CD4-positive, alpha-beta T cell (primary cell): ENCODE measurements at regions of chr6 and their contacts with region 1.

Region 1: GRCh38 chr6:160455541-160456213 is 107.5 kb downstream of the SLC22A3 start:
- DNase-seq: peak; percentile 49 to 80 (median 62)
- ATAC-seq: peak; percentile 98
- H3K4me3 ChIP-seq: no peak overlapping the region
- H3K4me3 Mint-ChIP-seq: no peak overlapping the region
- H3K27ac ChIP-seq: no peak overlapping the region
- H3K27ac Mint-ChIP-seq: no peak overlapping the region
- H3K4me1 ChIP-seq: peaks cover 47% of the 10 kb centered on the region
- H3K4me1 Mint-ChIP-seq: peaks cover 35% of the 10 kb centered on the region
- H3K27me3 ChIP-seq: no peaks in the 10 kb centered on the region
- H3K27me3 Mint-ChIP-seq: peaks cover 29% of the 10 kb centered on the region
- CTCF ChIP-seq: peak; percentile 98

Region 2: GRCh38 chr6:160088069-160088783 is 367.5 kb before region 1 on chr6:
- CTCF ChIA-PET with region 1: interaction called, 4 read pairs
- POLR2A ChIA-PET with region 1: no interaction called
- intact Hi-C with region 1: loop called in 1 of 2 experiments (anchors 5 kb)
- DNase-seq: no peak
- ATAC-seq: no peak
- H3K4me3 ChIP-seq: no peak overlapping the region
- H3K4me3 Mint-ChIP-seq: no peak overlapping the region
- H3K27ac ChIP-seq: no peak overlapping the region
- H3K27ac Mint-ChIP-seq: no peak overlapping the region
- H3K4me1 ChIP-seq: peaks cover 3% of the 10 kb centered on the region
- H3K4me1 Mint-ChIP-seq: no peaks in the 10 kb centered on the region
- H3K27me3 ChIP-seq: no peaks in the 10 kb centered on the region
- H3K27me3 Mint-ChIP-seq: no peaks in the 10 kb centered on the region
- CTCF ChIP-seq: no peak

Region 3: DNA sequence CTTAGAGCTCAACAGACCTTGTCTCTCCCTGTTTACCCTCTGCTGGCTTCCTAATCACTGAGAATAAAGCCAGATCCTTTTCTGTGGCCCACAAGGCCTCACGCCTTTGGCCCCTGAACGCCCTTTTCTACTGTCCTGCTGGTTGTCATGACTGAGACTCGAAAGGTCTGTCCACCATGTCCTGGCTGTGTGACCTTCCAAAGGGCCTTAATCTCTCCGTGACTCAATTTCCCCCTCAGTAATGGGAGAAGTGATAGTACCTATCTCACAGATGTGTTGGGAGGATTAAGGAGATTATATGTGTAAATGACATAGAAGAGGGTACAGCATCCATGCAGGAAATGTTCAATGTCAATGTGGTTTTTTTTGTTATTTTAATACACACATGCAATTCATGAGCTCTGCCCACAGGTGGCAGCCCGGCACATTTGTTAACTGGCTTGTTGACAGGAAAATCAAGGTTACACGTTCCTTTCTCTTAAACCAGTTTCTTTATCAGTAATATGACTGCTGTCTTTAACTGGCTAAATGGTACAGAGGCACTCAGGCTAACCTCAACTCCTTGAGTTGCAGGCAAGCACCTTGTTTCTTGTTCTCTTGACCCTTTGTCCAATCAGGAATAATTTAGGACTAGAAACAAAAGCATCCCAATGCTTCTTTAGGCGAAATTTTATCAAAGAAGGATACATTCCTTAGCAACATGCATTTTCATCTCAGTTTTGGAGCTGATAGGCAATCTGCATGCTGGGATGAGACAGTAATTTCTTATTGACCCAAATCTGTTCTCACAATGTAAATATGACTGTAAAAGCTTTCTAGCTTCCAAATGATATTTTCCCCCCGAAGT is 317.5 kb before region 1 on chr6:
- CTCF ChIA-PET with region 1: interaction called, 26 read pairs
- POLR2A ChIA-PET with region 1: no interaction called
- intact Hi-C with region 1: loop called (anchors 1 kb)
- DNase-seq: peak; percentile 41 to 74 (median 57)
- ATAC-seq: peak; percentile 68
- H3K4me3 ChIP-seq: no peak overlapping the region
- H3K4me3 Mint-ChIP-seq: no peak overlapping the region
- H3K27ac ChIP-seq: no peak overlapping the region
- H3K27ac Mint-ChIP-seq: no peak overlapping the region
- H3K4me1 ChIP-seq: peaks cover 7% of the 10 kb centered on the region
- H3K4me1 Mint-ChIP-seq: peaks cover 9% of the 10 kb centered on the region
- H3K27me3 ChIP-seq: no peaks in the 10 kb centered on the region
- H3K27me3 Mint-ChIP-seq: no peaks in the 10 kb centered on the region
- CTCF ChIP-seq: peak; percentile 78

Region 4: GRCh38 chr6:160469153-160469552 is 13.5 kb after region 1 on chr6:
- CTCF ChIA-PET with region 1: no interaction called
- POLR2A ChIA-PET with region 1: no interaction called
- intact Hi-C with region 1: no loop called
- DNase-seq: no peak
- ATAC-seq: no peak
- H3K4me3 ChIP-seq: no peak overlapping the region
- H3K4me3 Mint-ChIP-seq: no peak overlapping the region
- H3K27ac ChIP-seq: no peak overlapping the region
- H3K27ac Mint-ChIP-seq: no peak overlapping the region
- H3K4me1 ChIP-seq: peaks cover 10% of the 10 kb centered on the region
- H3K4me1 Mint-ChIP-seq: peaks cover 26% of the 10 kb centered on the region
- H3K27me3 ChIP-seq: no peaks in the 10 kb centered on the region
- H3K27me3 Mint-ChIP-seq: peaks cover 14% of the 10 kb centered on the region
- CTCF ChIP-seq: no peak

Region 5: DNA sequence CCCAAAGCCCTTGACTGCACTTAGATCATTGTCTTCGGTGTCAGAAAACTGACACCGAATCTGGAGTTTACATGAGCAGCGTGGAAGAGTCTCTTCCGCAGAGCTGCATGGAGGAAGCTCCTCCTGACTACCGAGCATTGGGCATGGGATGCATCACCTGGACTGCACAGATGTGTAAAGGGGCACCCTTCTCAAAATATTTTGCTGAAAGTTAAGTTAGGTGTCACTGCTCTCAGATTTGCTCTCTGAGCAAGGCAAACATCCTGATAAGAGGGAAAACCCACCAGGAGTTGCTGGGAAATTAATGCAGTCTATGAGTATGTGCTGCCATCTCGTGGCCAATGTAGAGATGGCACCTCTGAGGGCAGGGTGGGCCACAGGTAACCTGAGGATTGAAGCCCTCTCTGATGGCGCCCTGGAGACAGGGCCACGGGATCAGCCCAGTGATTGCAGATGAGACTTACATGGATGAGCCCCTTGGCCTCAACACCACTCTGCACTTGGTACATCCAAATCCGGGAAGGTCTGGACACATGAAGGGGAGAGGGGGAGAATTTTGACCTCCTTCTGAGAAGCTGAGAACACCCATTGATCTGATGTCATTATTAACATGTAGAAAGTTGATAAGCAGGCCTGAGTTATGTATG is 78.5 kb after region 1 on chr6:
- CTCF ChIA-PET with region 1: no interaction called
- POLR2A ChIA-PET with region 1: no interaction called
- intact Hi-C with region 1: loop called in 1 of 2 experiments (anchors 1 kb)
- DNase-seq: peak; percentile 32 to 75 (median 51)
- ATAC-seq: peak; percentile 64
- H3K4me3 ChIP-seq: peak overlapping the region; percentile 6
- H3K4me3 Mint-ChIP-seq: no peak overlapping the region
- H3K27ac ChIP-seq: no peak overlapping the region
- H3K27ac Mint-ChIP-seq: no peak overlapping the region
- H3K4me1 ChIP-seq: peaks cover 9% of the 10 kb centered on the region
- H3K4me1 Mint-ChIP-seq: no peaks in the 10 kb centered on the region
- H3K27me3 ChIP-seq: no peaks in the 10 kb centered on the region
- H3K27me3 Mint-ChIP-seq: peaks cover 7% of the 10 kb centered on the region
- CTCF ChIP-seq: peak; percentile 96

Region 6: GRCh38 chr6:160573943-160574342 is 118.3 kb after region 1 on chr6:
- CTCF ChIA-PET with region 1: no interaction called
- POLR2A ChIA-PET with region 1: no interaction called
- intact Hi-C with region 1: no loop called
- DNase-seq: no peak
- ATAC-seq: no peak
- H3K4me3 ChIP-seq: no peak overlapping the region
- H3K4me3 Mint-ChIP-seq: no peak overlapping the region
- H3K27ac ChIP-seq: no peak overlapping the region
- H3K27ac Mint-ChIP-seq: no peak overlapping the region
- H3K4me1 ChIP-seq: no peaks in the 10 kb centered on the region
- H3K4me1 Mint-ChIP-seq: no peaks in the 10 kb centered on the region
- H3K27me3 ChIP-seq: peaks cover 3 to 7% of the 10 kb centered on the region in 2 experiments
- H3K27me3 Mint-ChIP-seq: peaks cover 41% of the 10 kb centered on the region
- CTCF ChIP-seq: no peak